Activated T-helper 1 cell treated with anti-CD3 and anti-CD28 coated beads, Interleukin-12 subunit alpha, Interleukin-12 subunit beta, Interleukin-2, Interleukin-4 antibody, amounts not matched to agents 30 ng/mL and 10 ng/mL and 1 ng/mL, durations not matched to agents 14 hours and 24 hours and 36 hours (primary cell): ENCODE measurements at regions of chr6 and their contacts with region 1.

Region 1: GRCh38 chr6:163413345-163414116 is 987 bp upstream of the QKI start:
- DNase-seq: peak; percentile 89
- H3K4me3 Mint-ChIP-seq: peak overlapping the region; percentile 87
- H3K27ac Mint-ChIP-seq: peak overlapping the region; percentile 92
- H3K4me1 Mint-ChIP-seq: peaks cover 41% of the 10 kb centered on the region
- H3K27me3 Mint-ChIP-seq: peaks cover 3% of the 10 kb centered on the region

Region 2: GRCh38 chr6:162177746-162178145 is 1235.8 kb before region 1 on chr6:
- intact Hi-C with region 1: loop called (anchors 5 kb)
- DNase-seq: no peak
- H3K4me3 Mint-ChIP-seq: no peak overlapping the region
- H3K27ac Mint-ChIP-seq: no peak overlapping the region
- H3K4me1 Mint-ChIP-seq: peaks cover 21% of the 10 kb centered on the region
- H3K27me3 Mint-ChIP-seq: no peaks in the 10 kb centered on the region

Region 3: DNA sequence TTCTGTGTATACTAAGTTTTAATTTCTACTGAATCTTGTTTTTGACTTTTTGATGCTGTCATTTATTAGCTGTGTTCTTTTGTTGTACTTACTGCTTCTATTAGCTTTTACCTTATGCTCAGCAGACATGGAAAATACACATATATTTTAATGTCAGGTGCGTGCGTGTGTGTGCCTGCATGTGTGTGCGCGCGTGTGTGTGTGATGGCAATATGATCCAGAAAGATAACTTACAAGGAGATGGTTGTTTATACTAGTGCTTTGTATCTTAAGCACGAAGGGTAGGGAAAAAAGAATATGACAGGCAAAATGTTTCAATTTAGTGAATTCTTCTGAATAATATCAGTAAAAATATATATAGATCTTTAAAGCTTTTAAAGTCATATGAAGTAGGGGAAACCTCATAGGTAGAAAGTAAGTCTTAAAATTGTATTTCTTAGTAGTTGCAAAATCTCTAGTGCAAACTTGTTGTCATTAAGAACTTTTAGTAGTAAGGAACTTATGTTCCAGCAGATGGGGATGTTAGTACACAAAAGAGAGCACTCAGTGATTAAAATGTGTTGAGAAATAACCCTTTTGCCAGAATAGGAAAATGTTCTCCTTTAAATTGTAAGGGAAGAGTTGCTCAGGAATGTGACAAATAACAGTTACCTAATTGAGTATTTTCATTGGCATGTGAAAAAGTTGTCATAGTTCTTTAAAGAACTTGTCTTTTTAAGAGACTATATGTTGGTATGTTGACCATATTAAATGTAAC is 14.1 kb after region 1 on chr6:
- intact Hi-C with region 1: loop called (anchors 2 kb)
- DNase-seq: no peak
- H3K4me3 Mint-ChIP-seq: no peak overlapping the region
- H3K27ac Mint-ChIP-seq: no peak overlapping the region
- H3K4me1 Mint-ChIP-seq: peaks cover 16% of the 10 kb centered on the region
- H3K27me3 Mint-ChIP-seq: no peaks in the 10 kb centered on the region

Region 4: GRCh38 chr6:163554663-163555062 is 141.1 kb after region 1 on chr6:
- intact Hi-C with region 1: loop called (anchors 1 kb)
- DNase-seq: peak; percentile 30
- H3K4me3 Mint-ChIP-seq: no peak overlapping the region
- H3K27ac Mint-ChIP-seq: no peak overlapping the region
- H3K4me1 Mint-ChIP-seq: no peaks in the 10 kb centered on the region
- H3K27me3 Mint-ChIP-seq: no peaks in the 10 kb centered on the region

Region 5: GRCh38 chr6:163956571-163957407 is 543.3 kb after region 1 on chr6:
- intact Hi-C with region 1: loop called (anchors 1 kb)
- DNase-seq: peak; percentile 41
- H3K4me3 Mint-ChIP-seq: no peak overlapping the region
- H3K27ac Mint-ChIP-seq: no peak overlapping the region
- H3K4me1 Mint-ChIP-seq: no peaks in the 10 kb centered on the region
- H3K27me3 Mint-ChIP-seq: peaks cover 20% of the 10 kb centered on the region